Activated CD4-positive, alpha-beta T cell treated with anti-CD3 and anti-CD28 coated beads, Interleukin-2, amount 10 ng/mL, durations not matched to agents 24 days and 14 days (primary cell): ENCODE measurements at regions of chr10 and their contacts with region 1.

Region 1: GRCh38 chr10:119496273-119496672 is 46.2 kb downstream of the RGS10 start:
- DNase-seq: peak; percentile 79
- H3K4me3 Mint-ChIP-seq: peak overlapping the region; percentile 63
- H3K27ac Mint-ChIP-seq: peak overlapping the region; percentile 86
- H3K4me1 Mint-ChIP-seq: peaks cover 74% of the 10 kb centered on the region
- H3K27me3 Mint-ChIP-seq: no peaks in the 10 kb centered on the region

Region 2: DNA sequence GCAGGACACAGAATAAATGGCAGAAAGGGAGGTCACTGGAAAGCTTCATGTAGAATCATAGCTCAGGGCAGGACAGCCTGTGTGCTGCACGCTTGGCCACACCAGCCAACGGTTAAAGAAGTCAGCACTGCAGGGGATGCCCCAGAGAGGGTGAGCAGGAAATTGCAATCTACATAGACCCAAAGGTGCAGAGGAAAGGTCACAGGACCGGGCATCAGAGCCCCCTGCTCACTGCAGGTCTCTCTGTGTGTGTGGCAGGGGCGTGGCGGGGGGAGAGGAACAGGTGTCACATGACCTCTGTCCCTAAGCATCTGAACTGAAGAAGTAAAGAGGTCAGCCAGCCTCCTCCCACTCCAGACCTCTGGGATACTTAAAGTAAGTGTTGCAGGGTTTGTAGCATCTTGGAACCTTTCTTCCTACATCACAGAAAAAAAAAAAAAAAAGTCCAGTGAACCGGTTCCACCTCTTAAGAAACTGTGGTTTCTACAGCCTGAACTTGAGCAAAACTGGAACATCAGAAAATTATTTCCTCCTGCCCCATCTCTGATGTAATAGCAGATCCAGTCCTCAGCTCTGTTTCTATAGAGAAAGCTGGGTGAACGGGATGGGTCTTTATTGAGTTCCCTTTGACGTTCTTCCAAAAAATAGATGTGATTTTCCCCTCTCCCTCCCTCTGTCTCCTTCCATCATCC is 18.0 kb before region 1 on chr10:
- intact Hi-C with region 1: loop called (anchors 2 kb)
- DNase-seq: peak; percentile 78
- H3K4me3 Mint-ChIP-seq: peak overlapping the region; percentile 66
- H3K27ac Mint-ChIP-seq: peak overlapping the region; percentile 80
- H3K4me1 Mint-ChIP-seq: peaks cover 32% of the 10 kb centered on the region
- H3K27me3 Mint-ChIP-seq: no peaks in the 10 kb centered on the region

Region 3: GRCh38 chr10:119517235-119518141 is 21.2 kb after region 1 on chr10:
- intact Hi-C with region 1: loop called (anchors 1 kb)
- DNase-seq: peak; percentile 87
- H3K4me3 Mint-ChIP-seq: peak overlapping the region; percentile 75
- H3K27ac Mint-ChIP-seq: peak overlapping the region; percentile 90
- H3K4me1 Mint-ChIP-seq: peaks cover 48% of the 10 kb centered on the region
- H3K27me3 Mint-ChIP-seq: no peaks in the 10 kb centered on the region

Region 4: DNA sequence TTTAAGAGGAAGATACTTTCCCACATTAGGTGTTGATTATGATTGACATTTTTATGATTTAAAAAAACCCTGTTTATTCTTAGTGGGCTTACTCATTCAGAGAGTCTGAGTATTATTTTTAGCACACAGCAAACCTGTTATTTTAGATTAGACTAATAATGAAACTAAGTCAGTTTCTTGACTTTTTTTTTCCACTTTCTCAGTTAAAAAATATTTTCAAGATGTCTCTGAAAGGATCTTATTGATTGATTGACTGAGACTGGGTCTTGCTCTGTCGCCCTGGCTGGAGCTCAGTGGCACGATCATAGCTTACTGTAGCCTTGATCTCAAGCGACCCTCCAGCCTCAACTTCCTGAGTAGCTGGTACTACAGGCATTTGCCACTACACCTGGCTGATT is 209.2 kb after region 1 on chr10:
- intact Hi-C with region 1: loop called (anchors 5 kb)
- DNase-seq: peak; percentile 72
- H3K4me3 Mint-ChIP-seq: peak overlapping the region; percentile 75
- H3K27ac Mint-ChIP-seq: peak overlapping the region; percentile 99
- H3K4me1 Mint-ChIP-seq: peaks cover 56% of the 10 kb centered on the region
- H3K27me3 Mint-ChIP-seq: no peaks in the 10 kb centered on the region